Calu3 (cell line): ENCODE measurements at regions of chr16 and their contacts with region 1.

Region 1: GRCh38 chr16:68907781-68908181 is 64.5 kb downstream of the TANGO6 start:
- DNase-seq: no peak
- H3K4me3 Mint-ChIP-seq: no peak overlapping the region
- H3K27ac Mint-ChIP-seq: peak overlapping the region; percentile 15
- H3K4me1 Mint-ChIP-seq: peaks cover 2% of the 10 kb centered on the region
- H3K27me3 Mint-ChIP-seq: no peaks in the 10 kb centered on the region
- CTCF ChIP-seq: no peak

Region 2: GRCh38 chr16:69100071-69100691 is 192.4 kb after region 1 on chr16:
- CTCF ChIA-PET with region 1: interaction called, 10 read pairs
- intact Hi-C with region 1: loop called (anchors 2 kb)
- DNase-seq: no peak
- H3K4me3 Mint-ChIP-seq: no peak overlapping the region
- H3K27ac Mint-ChIP-seq: no peak overlapping the region
- H3K4me1 Mint-ChIP-seq: peaks cover 15% of the 10 kb centered on the region
- H3K27me3 Mint-ChIP-seq: peaks cover 8% of the 10 kb centered on the region
- CTCF ChIP-seq: no peak

Region 3: DNA sequence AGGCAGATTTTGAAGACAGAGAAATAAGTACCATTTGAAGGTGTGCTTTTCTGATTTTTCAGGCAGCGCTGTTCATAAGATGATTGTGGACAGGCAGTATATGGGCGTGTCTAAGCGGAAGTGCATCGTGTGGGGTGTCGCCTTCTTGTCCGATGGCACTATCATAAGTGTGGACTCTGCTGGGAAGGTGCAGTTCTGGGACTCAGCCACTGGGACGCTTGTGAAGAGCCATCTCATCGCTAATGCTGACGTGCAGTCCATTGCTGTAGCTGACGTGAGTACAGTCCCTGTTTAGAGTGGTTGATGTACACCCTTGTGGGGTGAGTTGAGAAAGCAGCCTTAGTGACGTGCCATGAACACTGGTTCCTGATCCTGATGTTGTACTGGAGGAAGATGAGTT is 235.3 kb after region 1 on chr16:
- CTCF ChIA-PET with region 1: no interaction called
- intact Hi-C with region 1: no loop called
- DNase-seq: no peak
- H3K4me3 Mint-ChIP-seq: no peak overlapping the region
- H3K27ac Mint-ChIP-seq: no peak overlapping the region
- H3K4me1 Mint-ChIP-seq: no peaks in the 10 kb centered on the region
- H3K27me3 Mint-ChIP-seq: no peaks in the 10 kb centered on the region
- CTCF ChIP-seq: no peak